ENCODE measurements at regions of chr6 and their contacts with region 1.

Region 1: DNA sequence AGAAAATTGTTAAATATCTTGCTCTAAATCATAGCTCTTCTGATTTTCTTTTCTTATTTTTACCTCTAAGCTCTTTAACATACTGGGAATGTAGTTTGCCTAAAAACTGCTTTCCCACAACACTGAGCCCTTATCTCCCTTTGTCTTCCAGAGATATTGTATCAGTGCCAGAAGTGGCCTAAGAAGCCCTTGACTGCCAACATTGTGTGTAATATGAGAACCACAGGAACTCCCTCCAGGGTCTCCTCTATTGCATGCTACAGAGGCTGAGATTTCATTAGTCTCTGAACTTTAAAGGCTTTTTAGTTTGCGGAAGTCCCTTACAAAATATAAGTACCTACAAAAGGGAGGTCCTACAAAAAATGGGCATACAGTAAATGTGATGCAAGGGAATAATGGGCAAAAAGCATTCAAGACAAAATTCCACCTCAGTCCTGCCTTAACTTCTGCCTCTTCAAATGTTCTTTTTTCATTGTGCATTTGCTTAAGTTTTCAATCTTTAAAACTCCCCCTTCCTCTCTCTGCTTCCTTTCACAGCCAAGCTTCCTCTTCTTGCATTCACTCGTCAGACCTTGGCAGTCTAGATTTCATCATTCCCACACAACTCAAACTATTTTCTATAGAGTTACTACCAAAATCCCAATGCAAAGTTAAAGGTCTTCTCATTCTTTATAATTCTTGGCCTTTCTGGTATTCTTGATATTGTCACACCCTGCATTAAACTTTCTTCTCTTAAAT is 76.5 kb downstream of the ADGRG6 start:
- DNase-seq: peak; percentile 93
- H3K4me3 Mint-ChIP-seq: no peak overlapping the region
- H3K27ac Mint-ChIP-seq: peak overlapping the region; percentile 68
- H3K4me1 Mint-ChIP-seq: peaks cover 39% of the 10 kb centered on the region
- H3K27me3 Mint-ChIP-seq: no peaks in the 10 kb centered on the region
- CTCF ChIP-seq: no peak

Region 2: GRCh38 chr6:142155895-142156757 is 222.2 kb before region 1 on chr6:
- CTCF ChIA-PET with region 1: interaction called, 12 read pairs
- POLR2A ChIA-PET with region 1: interaction called, 3 read pairs
- intact Hi-C with region 1: no loop called
- DNase-seq: peak; percentile 33
- H3K4me3 Mint-ChIP-seq: peak overlapping the region; percentile 4
- H3K27ac Mint-ChIP-seq: peak overlapping the region; percentile 59
- H3K4me1 Mint-ChIP-seq: peaks cover 6% of the 10 kb centered on the region
- H3K27me3 Mint-ChIP-seq: no peaks in the 10 kb centered on the region
- CTCF ChIP-seq: peak; percentile 46

Region 3: GRCh38 chr6:142313284-142313683 is 65.0 kb before region 1 on chr6:
- CTCF ChIA-PET with region 1: interaction called, 3 read pairs
- POLR2A ChIA-PET with region 1: interaction called, 10 read pairs
- intact Hi-C with region 1: no loop called
- DNase-seq: peak; percentile 61
- H3K4me3 Mint-ChIP-seq: peak overlapping the region; percentile 15
- H3K27ac Mint-ChIP-seq: peak overlapping the region; percentile 57
- H3K4me1 Mint-ChIP-seq: peaks cover 11% of the 10 kb centered on the region
- H3K27me3 Mint-ChIP-seq: no peaks in the 10 kb centered on the region
- CTCF ChIP-seq: no peak

Region 4: DNA sequence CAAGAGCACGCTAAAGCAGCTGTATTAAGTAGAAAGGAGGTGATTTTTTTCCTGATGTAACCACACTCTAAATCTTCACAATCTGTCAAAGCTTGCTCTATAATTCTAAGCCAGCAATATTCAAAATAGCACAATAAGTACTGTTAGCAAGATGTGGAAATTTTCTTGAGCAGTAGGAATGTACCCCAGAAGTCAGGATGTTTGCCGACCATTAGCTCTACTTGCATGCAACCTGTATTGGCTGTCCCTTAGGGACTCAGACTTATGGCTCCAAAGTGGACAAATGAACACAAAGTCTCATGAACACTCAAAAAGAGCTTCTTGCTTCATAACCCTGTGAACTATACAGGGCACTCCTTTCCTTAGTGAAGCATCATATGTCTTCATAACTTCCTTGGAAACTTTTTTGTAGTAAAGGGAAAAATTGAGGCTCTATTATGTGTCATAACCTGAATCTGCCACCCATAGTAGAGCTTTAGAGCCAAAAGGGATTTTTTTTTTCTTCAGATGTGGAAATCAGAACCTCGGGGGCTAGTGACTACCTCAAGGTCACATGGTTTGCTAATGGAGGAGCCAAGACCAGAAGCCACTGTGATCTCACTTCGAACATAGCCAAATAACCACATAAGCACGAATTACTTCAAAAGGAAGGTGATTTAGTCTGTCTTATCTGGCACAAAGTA is 22.0 kb before region 1 on chr6:
- CTCF ChIA-PET with region 1: interaction called, 7 read pairs
- POLR2A ChIA-PET with region 1: interaction called, 40 read pairs
- intact Hi-C with region 1: no loop called
- DNase-seq: peak; percentile 87
- H3K4me3 Mint-ChIP-seq: peak overlapping the region; percentile 30
- H3K27ac Mint-ChIP-seq: peak overlapping the region; percentile 73
- H3K4me1 Mint-ChIP-seq: peaks cover 25% of the 10 kb centered on the region
- H3K27me3 Mint-ChIP-seq: no peaks in the 10 kb centered on the region
- CTCF ChIP-seq: no peak

Measured in MCF 10A (cell line).